HEK293 (cell line): ENCODE measurements at regions of chr1 and their contacts with region 1.

Region 1: DNA sequence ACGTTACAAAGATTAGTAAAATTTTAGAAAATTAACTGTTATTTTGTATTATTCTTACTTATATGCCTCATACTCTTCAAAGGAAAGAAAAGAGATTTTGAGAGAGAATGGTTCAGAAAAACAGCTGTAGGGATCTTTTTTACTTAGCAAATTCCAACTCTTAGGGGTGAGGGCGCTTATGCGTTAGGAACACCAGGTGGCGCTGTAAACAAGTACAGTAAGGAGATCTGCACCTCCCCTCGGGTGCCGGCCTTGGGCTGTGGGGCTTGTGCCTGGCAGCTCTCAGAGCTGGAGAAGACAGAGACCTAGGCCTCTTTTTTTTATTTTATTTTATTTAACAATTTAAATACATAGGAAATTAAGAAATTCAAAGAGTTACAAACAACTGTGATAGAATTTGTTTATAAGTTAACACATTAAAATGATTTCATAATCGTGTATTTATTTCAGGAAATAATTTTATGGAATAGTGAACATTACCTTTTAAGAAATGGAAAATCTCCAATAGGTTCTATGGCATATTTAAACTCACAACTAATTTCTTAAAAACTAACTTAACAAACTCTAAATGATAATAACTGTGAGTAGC is 32.6 kb downstream of the UTP25 start:
- H3K4me3 ChIP-seq: no peak overlapping the region
- H3K27ac ChIP-seq: no peak overlapping the region
- H3K4me1 ChIP-seq: peaks cover 7% of the 10 kb centered on the region; the same call in 1 of the 2 replicates
- CTCF ChIP-seq: peak; percentile 40

Region 2: DNA sequence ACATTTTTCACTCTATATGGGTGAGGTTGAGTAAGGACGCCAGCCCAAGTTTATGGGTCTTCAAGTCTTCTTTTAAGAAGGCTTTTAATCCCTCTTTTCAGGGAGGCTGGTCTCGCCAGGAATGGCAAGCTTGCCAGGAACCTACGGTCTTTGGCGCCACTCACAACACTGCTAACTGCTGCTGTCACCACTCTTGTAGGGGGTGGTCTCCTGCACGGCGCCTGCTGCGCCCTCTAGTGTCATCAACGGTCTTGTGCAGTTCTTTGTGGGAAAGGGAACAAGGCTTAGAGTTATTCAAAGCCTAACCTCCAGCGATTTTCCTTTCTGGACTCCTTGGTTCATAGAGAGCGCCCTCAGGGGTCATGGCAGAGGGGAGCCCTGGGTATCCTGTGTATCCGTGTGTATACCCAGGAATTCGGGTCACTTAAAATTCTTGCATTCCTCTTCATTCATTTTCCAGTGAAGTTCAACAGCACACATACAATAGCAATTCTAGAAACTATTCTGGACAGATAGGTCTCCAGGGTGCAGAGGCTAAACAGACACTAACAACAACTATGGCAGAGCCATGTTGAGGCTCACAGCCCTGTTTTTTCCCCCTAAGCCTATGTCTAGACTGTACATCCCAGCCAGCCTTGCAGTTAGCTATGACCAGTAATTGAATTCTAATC is 669.7 kb before region 1 on chr1:
- CTCF ChIA-PET with region 1: no interaction called
- POLR2A ChIA-PET with region 1: no interaction called
- H3K4me3 ChIP-seq: no peak overlapping the region
- H3K27ac ChIP-seq: no peak overlapping the region
- H3K4me1 ChIP-seq: no peaks in the 10 kb centered on the region
- CTCF ChIP-seq: peak; percentile 64; the same call in 1 of the 2 replicates

Region 3: DNA sequence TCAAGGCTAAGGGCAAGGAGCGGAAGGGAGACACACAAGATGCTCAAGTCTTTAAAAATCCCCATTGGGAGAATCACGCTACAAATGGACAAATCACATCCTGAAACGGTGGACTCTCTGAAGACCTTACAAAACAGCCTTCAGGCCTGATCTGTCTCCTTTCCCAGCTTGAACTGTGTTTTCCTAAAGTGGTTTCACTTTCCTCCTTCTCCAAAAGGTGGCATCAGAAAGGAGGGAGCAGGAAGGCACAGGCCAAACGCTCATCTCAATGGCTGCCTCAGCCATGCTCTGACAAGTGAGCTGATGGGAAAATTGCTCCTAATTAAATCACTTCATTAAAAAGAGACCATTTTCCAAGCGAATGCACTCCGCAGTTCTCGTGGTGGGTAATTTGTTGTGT is 15.1 kb after region 1 on chr1:
- CTCF ChIA-PET with region 1: interaction called, 17 read pairs
- POLR2A ChIA-PET with region 1: no interaction called
- H3K4me3 ChIP-seq: no peak overlapping the region
- H3K27ac ChIP-seq: no peak overlapping the region
- H3K4me1 ChIP-seq: no peaks in the 10 kb centered on the region; the same call in 1 of the 2 replicates
- CTCF ChIP-seq: peak; percentile 59

Region 4: GRCh38 chr1:209983953-209984352 is 123.6 kb after region 1 on chr1:
- CTCF ChIA-PET with region 1: interaction called, 84 read pairs
- POLR2A ChIA-PET with region 1: no interaction called
- H3K4me3 ChIP-seq: no peak overlapping the region
- H3K27ac ChIP-seq: no peak overlapping the region
- H3K4me1 ChIP-seq: no peaks in the 10 kb centered on the region
- CTCF ChIP-seq: no peak